ENCODE measurements at regions of chr17 and their contacts with region 1.

Region 1: DNA sequence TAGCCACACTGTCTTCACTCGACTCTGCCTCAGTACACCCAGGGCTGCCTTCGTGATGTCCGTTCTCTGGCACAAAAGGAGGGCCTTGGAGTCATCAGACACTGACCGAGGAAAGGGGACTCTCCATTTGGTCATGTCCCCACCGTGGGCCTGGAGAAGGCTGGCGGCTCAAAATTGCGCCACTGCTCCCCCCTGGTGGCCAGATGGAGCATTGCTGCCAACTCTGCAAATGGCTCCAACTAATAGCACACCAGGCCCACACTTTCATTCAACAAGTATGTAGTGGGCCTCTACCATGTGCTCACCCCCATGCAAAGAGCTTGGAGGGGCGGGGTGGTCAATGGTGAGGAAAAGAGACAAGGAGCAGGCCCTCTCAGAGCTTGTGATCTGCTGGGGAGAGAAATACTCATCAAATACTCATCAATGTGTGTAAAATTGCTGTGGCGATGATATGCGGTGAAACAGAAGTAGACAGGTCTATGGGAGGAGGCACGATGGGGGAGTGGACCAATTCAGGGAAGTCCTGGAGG is 5.2 kb upstream of the GRIN2C start:
- H3K4me3 ChIP-seq: no peak overlapping the region
- H3K27ac ChIP-seq: no peak overlapping the region
- H3K4me1 ChIP-seq: 0 out of 2 replicates have a peak, but pooled peaks cover 2% of the 10 kb centered on the region
- CTCF ChIP-seq: peak; percentile 85

Region 2: DNA sequence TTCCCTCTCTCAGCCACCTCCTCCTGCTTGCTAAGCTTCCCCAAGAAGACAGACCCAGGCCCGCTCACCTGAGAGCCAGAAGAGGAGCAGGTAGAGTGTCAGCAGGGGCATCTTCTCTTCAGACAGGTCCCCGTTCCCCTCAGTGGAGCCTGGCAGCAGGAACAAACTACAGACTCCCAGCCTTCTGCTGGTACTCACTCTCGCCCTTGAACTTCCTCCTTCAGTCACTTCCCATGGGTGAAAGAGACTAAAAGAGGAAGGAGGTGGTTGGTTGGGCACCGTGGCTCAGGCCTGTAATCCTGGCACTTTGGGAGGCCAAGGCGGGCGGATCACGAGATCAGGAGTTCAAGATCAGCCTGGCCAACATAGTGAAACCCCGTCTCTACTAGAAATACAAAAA is 152.2 kb before region 1 on chr17 and contains the start of gene CD300LF:
- CTCF ChIA-PET with region 1: no interaction called
- POLR2A ChIA-PET with region 1: no interaction called
- H3K4me3 ChIP-seq: no peak within 1 kb of the TSS
- H3K27ac ChIP-seq: no peak within 1 kb of the TSS
- H3K4me1 ChIP-seq: peaks cover 3% of the 10 kb centered on the region; the same call in 1 of the 2 replicates
- CTCF ChIP-seq: no peak

Region 3: GRCh38 chr17:74736513-74737298 is 128.2 kb before region 1 on chr17 and contains the start of gene RAB37:
- CTCF ChIA-PET with region 1: interaction called, 13 read pairs
- POLR2A ChIA-PET with region 1: interaction called, 3 read pairs
- H3K4me3 ChIP-seq: peak within 1 kb of the TSS; percentile 5; the same call in 1 of the 2 replicates
- H3K27ac ChIP-seq: no peak within 1 kb of the TSS
- H3K4me1 ChIP-seq: peaks cover 2% of the 10 kb centered on the region; the same call in 1 of the 2 replicates
- CTCF ChIP-seq: no peak

Region 4: DNA sequence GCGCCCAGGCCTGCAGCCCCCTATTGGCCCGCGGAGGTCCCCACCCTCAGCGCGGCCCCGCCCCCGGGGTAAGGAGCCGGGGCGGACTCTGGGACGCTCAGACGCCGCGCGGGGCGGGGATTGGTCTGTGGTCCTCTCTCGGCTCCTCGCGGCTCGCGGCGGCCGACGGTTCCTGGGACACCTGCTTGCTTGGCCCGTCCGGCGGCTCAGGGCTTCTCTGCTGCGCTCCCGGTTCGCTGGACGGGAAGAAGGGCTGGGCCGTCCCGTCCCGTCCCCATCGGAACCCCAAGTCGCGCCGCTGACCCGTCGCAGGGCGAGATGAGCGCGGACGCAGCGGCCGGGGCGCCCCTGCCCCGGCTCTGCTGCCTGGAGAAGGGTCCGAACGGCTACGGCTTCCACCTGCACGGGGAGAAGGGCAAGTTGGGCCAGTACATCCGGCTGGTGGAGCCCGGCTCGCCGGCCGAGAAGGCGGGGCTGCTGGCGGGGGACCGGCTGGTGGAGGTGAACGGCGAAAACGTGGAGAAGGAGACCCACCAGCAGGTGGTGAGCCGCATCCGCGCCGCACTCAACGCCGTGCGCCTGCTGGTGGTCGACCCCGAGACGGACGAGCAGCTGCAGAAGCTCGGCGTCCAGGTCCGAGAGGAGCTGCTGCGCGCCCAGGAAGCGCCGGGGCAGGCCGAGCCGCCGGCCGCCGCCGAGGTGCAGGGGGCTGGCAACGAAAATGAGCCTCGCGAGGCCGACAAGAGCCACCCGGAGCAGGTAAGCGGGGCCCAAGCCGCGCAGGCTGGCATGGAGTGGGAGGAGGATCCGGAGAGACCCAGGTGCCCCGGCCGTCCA is 116.2 kb before region 1 on chr17 and contains the start of gene NHERF1:
- CTCF ChIA-PET with region 1: interaction called, 74 read pairs
- POLR2A ChIA-PET with region 1: interaction called, 5 read pairs
- H3K4me3 ChIP-seq: peak within 1 kb of the TSS; percentile 81
- H3K27ac ChIP-seq: peak within 1 kb of the TSS; percentile 68; the same call in 1 of the 2 replicates
- H3K4me1 ChIP-seq: peaks cover 7% of the 10 kb centered on the region
- CTCF ChIP-seq: peak; percentile 100

Region 5: GRCh38 chr17:74776044-74776977 is 88.6 kb before region 1 on chr17 and contains the start of gene NAT9:
- CTCF ChIA-PET with region 1: interaction called, 18 read pairs
- POLR2A ChIA-PET with region 1: interaction called, 4 read pairs
- H3K4me3 ChIP-seq: peak within 1 kb of the TSS; percentile 84
- H3K27ac ChIP-seq: peak within 1 kb of the TSS; percentile 50
- H3K4me1 ChIP-seq: peaks cover 3% of the 10 kb centered on the region; the same call in 1 of the 2 replicates
- CTCF ChIP-seq: no peak

Region 6: DNA sequence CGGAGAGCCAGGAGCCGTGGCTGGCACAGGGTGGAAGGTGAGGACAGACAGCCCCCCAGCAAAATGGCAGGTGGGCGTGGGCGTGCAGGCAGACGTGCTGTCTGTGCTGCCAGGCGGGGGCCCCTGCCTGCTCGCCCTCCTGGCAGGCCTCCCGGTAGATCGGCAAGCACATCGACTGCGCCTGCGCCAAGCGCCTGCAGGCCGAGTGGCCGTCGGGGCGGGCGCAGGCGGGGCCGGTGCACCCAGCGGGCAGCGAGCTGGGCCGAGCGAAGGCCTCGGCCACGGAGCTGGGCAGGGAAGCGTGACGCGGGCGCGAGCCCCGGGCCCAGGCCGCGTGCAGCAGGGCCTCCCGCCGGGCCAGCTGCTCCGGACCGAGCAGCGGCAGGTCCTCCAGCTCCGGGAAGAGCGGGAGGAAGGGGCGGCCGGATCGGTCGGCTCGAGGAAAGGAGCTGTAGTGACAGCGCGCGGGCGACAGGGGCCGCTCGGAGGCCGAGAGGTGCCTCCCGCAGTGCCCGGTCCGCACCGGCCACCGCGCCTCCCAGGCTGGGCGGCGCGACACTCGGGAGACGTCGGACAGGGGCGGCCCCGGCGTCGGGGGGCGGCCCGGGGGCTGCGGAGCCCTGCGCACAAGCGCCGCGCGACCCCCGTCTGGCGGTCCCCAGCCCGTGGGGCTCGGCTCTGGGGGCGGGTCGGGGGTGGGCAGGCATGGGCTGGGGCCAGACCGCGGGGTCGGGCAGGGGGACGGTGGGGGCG is 22.2 kb before region 1 on chr17:
- CTCF ChIA-PET with region 1: interaction called, 239 read pairs
- POLR2A ChIA-PET with region 1: interaction called, 6 read pairs
- H3K4me3 ChIP-seq: peak overlapping the region; percentile 27
- H3K27ac ChIP-seq: peak overlapping the region; percentile 46; the same call in 1 of the 2 replicates
- H3K4me1 ChIP-seq: 0 out of 2 replicates have a peak, but pooled peaks cover 3% of the 10 kb centered on the region
- CTCF ChIP-seq: no peak

Region 7: GRCh38 chr17:74852237-74853047 is 12.5 kb before region 1 on chr17:
- CTCF ChIA-PET with region 1: interaction called, 239 read pairs
- POLR2A ChIA-PET with region 1: interaction called, 11 read pairs
- H3K4me3 ChIP-seq: peak overlapping the region; percentile 28
- H3K27ac ChIP-seq: no peak overlapping the region
- H3K4me1 ChIP-seq: peaks cover 5% of the 10 kb centered on the region; the same call in 1 of the 2 replicates
- CTCF ChIP-seq: no peak

Measured in HEK293 (cell line).